Adrenal gland (tissue), 19 donors: ENCODE measurements at regions of chr9 and their contacts with region 1.

Region 1: DNA sequence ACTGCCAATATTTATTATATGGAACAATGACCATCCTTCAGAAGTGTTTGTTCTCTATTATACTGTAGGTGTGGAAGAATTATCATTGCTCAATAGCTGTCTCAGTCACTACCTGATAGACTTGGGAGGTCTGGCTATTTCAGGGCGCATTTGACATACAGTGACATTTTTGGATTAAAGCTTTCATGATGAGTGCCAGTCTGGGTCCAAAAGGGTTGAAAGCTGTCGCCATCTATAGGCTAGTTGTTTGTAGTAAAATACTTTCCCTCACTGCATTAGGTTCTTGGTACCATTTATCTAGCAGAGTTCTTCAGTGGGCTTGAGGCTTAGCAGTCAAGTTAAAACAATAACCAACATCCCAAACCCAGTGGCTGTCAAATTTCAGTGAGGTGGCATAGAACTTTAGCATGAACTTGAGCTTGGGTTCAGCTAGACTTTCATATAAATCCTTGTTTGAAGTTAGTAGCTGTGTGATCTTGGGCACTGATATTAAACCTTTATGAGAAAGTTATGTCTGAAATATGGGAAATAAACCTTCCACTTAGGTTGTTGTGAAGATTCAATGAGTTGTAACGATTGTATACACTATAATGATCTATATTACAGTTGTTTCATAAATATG is 110.5 kb upstream of the CDKN2B start:
- DNase-seq: peak in 3 of 7 donors; percentile 16 to 35 (median 27)
- H3K4me3 ChIP-seq: no peak overlapping the region
- H3K27ac ChIP-seq: no peak overlapping the region
- H3K4me1 ChIP-seq: no peaks in the 10 kb centered on the region
- H3K27me3 ChIP-seq: no peaks in the 10 kb centered on the region
- CTCF ChIP-seq: peak; percentile 22 to 58 (median 52)
- POLR2A ChIP-seq: no peak

Region 2: DNA sequence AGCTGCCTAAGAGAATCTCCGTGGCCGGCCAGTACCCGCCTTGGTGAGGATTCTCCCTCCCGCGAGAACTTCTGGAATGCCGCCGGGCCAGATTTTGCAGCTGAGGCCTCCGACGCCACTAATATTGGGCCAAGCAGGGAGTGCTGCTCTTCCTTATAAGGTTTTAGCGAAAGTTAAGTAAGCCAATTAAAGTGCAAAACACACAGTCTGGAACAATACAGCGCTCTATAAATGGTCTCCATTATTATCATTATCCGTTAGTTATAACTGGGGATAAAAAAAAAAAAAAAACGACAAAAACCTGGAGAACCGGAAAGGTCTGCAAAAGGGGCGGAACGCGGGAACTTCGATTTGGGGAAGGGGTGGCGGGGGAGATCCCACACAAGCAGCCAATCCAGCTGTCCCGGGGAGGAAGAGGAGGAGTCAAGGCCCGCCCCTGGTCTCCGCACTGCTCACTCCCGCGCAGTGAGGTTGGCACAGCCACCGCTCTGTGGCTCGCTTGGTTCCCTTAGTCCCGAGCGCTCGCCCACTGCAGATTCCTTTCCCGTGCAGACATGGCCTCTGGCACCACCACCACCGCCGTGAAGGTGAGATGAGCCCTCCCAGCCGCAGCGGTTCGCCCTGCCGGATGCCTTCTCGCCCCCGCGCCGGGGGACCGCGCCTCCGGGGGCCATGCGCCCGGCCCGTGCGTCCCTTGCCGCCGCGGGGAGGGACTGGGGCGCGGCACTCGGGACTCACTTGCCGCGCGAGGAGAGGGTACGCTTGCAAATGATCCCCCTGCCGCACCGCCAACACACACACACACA is 317.2 kb before region 1 on chr9 and contains the start of gene MTAP:
- intact Hi-C with region 1: loop called in 1 of 2 experiments (anchors 10 kb)
- DNase-seq: peak; percentile 93 to 98 (median 96)
- H3K4me3 ChIP-seq: peak within 1 kb of the TSS; percentile 41 to 85 (median 82)
- H3K27ac ChIP-seq: peak within 1 kb of the TSS; percentile 50 to 94 (median 78)
- H3K4me1 ChIP-seq: peaks cover 5 to 25% of the 10 kb centered on the region in 2 donors
- H3K27me3 ChIP-seq: no peaks in the 10 kb centered on the region
- CTCF ChIP-seq: no peak
- POLR2A ChIP-seq: peak; percentile 88 to 91
- total RNA-seq, gene MTAP: 10.4 to 38.2 (median 24.8) TPM

Region 3: GRCh38 chr9:22037954-22038690 is 81.5 kb before region 1 on chr9:
- intact Hi-C with region 1: loop called in 1 of 2 experiments (anchors 10 kb)
- DNase-seq: no peak
- H3K4me3 ChIP-seq: peak overlapping the region in 1 of 4 donors; percentile 0
- H3K27ac ChIP-seq: no peak overlapping the region
- H3K4me1 ChIP-seq: peaks cover 0 to 15% of the 10 kb centered on the region in 2 donors
- H3K27me3 ChIP-seq: no peaks in the 10 kb centered on the region
- CTCF ChIP-seq: peak; percentile 27 to 68 (median 50)
- POLR2A ChIP-seq: no peak

Region 4: GRCh38 chr9:22052376-22052945 is 67.2 kb before region 1 on chr9:
- intact Hi-C with region 1: loop called in 1 of 2 experiments (anchors 10 kb)
- DNase-seq: peak in 1 of 7 donors; percentile 13
- H3K4me3 ChIP-seq: no peak overlapping the region
- H3K27ac ChIP-seq: no peak overlapping the region
- H3K4me1 ChIP-seq: no peaks in the 10 kb centered on the region
- H3K27me3 ChIP-seq: no peaks in the 10 kb centered on the region
- CTCF ChIP-seq: no peak
- POLR2A ChIP-seq: no peak

Region 5: DNA sequence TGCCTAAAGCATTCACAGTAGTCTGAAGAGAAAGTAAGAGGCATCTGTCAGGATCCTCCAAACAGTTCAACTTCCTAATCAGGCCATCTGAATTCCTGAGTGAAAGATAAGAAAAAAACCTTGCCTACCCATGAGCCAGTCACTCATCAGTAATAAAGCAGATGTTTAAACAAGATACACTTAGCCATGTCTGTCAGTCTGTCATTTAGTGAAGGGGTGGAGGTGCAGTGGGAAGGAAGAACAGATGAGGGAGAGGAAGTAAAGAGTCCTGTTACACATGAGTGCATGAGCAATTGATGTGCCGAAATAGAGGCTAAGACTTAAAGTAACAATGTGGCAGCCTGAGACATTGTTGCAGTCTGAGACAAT is 297.0 kb after region 1 on chr9:
- intact Hi-C with region 1: no loop called
- DNase-seq: no peak
- H3K4me3 ChIP-seq: no peak overlapping the region
- H3K27ac ChIP-seq: no peak overlapping the region
- H3K4me1 ChIP-seq: no peaks in the 10 kb centered on the region
- H3K27me3 ChIP-seq: no peaks in the 10 kb centered on the region
- CTCF ChIP-seq: no peak
- POLR2A ChIP-seq: no peak

Region 6: DNA sequence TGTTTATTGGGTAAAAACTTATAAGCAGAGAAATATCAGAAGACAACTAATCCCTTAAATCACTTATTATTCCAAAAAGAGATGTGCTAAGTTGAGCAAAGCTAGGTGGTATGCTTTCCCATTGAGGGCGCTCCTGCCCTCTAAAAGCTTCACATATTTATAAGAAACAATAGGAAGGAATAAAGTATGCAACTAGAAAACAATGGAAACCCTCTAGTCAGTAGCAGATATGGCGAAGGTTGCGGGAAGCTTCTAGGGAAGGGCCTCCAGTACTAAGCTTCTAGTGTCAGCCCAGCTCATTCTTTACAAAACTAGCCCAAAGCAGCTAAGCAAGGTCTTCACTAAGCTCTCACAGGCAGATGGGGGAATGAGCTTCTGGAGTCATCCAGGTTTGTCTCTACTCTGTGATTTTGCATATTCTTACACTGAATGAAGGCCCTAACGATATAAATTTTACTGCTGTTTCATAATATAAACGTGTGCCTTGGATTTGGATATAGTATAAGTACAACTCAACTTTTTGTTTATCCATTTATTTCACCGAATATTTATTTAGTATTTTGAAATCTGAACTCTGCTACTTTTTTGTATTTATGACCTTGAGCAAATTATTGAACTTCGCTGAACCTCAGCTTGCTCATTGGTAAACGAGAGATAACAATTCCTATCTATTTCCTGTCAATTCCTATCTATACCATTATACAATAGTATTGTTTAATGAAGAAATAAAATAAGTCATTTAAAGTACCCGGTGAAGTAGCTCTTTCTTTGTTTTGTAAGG is 1134.9 kb after region 1 on chr9:
- intact Hi-C with region 1: no loop called
- DNase-seq: no peak
- H3K4me3 ChIP-seq: no peak overlapping the region
- H3K27ac ChIP-seq: no peak overlapping the region
- H3K4me1 ChIP-seq: no peaks in the 10 kb centered on the region
- H3K27me3 ChIP-seq: no peaks in the 10 kb centered on the region
- CTCF ChIP-seq: no peak
- POLR2A ChIP-seq: no peak